ENCODE measurements at regions of chr9 and their contacts with region 1.

Region 1: DNA sequence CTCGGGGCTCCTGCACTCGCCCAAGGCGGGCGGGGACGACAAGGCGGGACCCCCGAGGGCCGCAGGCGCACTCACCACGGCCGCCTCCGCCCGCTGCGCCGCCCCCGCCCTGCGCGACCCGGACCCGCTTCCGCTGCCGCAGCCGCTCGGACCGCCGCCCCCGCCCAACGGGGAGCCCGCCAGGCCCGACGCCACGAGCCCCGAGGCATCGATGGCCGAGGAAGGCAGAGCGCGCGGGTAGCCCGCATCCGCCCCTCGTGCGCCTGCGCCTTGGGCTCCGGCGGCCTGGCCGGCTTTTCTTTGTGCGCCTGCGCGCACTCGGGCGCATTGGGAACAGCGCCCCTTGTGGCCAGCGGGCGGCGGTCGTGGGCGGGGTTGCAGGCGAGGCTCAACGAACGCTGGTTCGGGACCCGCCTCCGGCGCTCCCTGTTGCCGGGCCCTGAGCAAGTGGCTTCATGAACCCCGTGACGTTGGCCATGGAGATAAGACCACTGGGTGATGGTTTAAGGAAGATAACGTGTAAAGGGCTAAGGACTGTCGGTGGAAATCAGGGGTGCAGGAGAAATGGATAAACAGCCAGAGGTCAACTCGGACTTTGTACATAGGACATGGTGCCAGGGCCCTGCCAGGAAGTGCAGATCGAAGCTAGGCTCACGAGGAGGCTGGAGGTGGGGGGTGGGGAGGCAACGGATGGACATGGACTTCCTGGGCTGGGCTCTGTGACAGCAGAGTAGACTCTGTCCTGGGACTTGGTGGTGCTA is at the starts of genes C8G and FBXW5:
- DNase-seq: peak; percentile 95 to 98
- ATAC-seq: peak; percentile 45 to 88 (median 67)
- H3K4me3 ChIP-seq: peak within 1 kb of the TSS; percentile 66 to 99 (median 92)
- H3K27ac ChIP-seq: peak within 1 kb of the TSS; percentile 94 to 99 (median 98)
- H3K4me1 ChIP-seq: peaks cover 24 to 74% (median 40%) of the 10 kb centered on the region in 9 donors
- H3K27me3 ChIP-seq: no peaks in the 10 kb centered on the region
- CTCF ChIP-seq: peak; percentile 94 to 100 (median 98)
- total RNA-seq, gene C8G: 1.2 to 10.0 (median 2.4) TPM
- total RNA-seq, gene FBXW5: 118 to 169 (median 138) TPM

Region 2: DNA sequence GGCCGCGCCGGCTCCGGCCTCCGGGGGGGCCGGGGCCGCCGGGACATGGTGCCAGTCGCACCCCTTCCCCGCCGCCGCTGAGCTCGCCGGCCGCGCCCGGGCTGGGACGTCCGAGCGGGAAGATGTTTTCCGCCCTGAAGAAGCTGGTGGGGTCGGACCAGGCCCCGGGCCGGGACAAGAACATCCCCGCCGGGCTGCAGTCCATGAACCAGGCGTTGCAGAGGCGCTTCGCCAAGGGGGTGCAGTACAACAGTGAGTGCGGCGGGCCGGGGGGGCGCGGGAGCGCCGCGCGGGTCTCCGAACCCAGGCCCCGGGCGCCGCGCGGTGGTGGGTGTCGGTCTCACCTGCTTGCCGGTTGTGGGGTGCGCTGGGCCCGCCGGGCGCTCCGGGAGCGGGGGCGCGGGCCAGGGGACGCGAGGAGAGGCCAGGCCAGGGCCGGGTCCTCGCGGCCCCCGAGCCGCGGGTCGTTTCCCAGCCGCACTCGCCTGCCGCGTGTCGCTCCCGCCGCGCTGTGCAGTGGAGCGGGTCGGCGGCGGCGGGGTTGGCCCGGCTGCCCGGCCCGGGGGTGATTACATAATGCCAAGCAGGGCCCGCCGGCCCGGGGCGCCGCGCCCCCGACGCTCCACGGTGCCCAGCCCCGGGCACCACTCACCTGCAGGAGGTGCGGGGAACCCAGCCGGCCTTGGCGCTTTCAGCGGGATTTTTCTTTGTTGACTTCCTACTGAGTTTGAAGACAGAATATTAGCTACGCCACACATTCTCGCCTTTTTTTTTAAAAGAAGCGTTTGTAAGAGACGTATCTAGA is 136.4 kb before region 1 on chr9:
- intact Hi-C with region 1: no loop called
- DNase-seq: no peak
- ATAC-seq: peak in 4 of 8 donors; percentile 1 to 29 (median 9)
- H3K4me3 ChIP-seq: peak overlapping the region; percentile 67 to 100 (median 96)
- H3K27ac ChIP-seq: peak overlapping the region; percentile 42 to 95 (median 92)
- H3K4me1 ChIP-seq: peaks cover 0 to 43% (median 35%) of the 10 kb centered on the region in 9 donors
- H3K27me3 ChIP-seq: no peaks in the 10 kb centered on the region
- CTCF ChIP-seq: no peak

Region 3: DNA sequence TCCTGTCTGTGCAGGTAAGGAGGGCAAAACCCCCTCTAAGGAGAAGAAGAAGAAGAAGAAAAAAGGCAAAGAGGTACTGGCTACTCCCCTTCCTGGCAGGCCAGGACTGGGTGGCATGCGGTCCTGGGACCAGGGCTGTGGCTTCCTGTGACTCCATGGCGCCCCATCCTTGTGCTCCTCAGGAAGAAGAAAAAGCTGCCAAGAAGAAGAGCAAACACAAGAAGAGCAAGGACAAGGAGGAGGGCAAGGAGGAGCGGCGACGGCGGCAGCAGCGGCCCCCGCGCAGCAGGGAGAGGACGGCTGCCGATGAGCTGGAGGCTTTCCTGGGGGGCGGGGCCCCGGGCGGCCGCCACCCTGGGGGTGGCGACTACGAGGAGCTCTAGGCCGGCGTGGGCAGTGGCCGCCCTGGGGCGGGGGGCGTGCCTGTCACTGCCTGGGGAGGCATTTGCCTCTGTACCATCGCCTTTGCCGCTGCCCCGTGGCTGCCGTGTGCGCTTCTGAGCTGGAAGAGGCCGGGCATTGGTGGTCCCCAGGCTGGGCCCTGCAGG is 104.5 kb before region 1 on chr9:
- intact Hi-C with region 1: loop called in 5 of 10 experiments (anchors 2 to 5 kb)
- DNase-seq: no peak
- ATAC-seq: no peak
- H3K4me3 ChIP-seq: no peak overlapping the region
- H3K27ac ChIP-seq: no peak overlapping the region
- H3K4me1 ChIP-seq: peaks cover 17 to 39% (median 30%) of the 10 kb centered on the region in 9 donors
- H3K27me3 ChIP-seq: peaks cover 0 to 21% (median 17%) of the 10 kb centered on the region in 7 donors
- CTCF ChIP-seq: no peak

Region 4: GRCh38 chr9:136885950-136886578 is 58.6 kb before region 1 on chr9 and contains the start of gene TRAF2:
- intact Hi-C with region 1: loop called in 3 of 10 experiments (anchors 2 to 10 kb)
- DNase-seq: peak; percentile 98 to 99
- ATAC-seq: peak; percentile 93 to 99 (median 98)
- H3K4me3 ChIP-seq: peak within 1 kb of the TSS; percentile 80 to 99 (median 95)
- H3K27ac ChIP-seq: peak within 1 kb of the TSS in 9 of 10 donors; percentile 83 to 95 (median 93)
- H3K4me1 ChIP-seq: peaks cover 13 to 48% (median 37%) of the 10 kb centered on the region in 9 donors
- H3K27me3 ChIP-seq: no peaks in the 10 kb centered on the region
- CTCF ChIP-seq: peak in 2 of 9 donors; percentile 23 to 26
- total RNA-seq, gene TRAF2: 5.4 to 14.8 (median 9.7) TPM

Region 5: DNA sequence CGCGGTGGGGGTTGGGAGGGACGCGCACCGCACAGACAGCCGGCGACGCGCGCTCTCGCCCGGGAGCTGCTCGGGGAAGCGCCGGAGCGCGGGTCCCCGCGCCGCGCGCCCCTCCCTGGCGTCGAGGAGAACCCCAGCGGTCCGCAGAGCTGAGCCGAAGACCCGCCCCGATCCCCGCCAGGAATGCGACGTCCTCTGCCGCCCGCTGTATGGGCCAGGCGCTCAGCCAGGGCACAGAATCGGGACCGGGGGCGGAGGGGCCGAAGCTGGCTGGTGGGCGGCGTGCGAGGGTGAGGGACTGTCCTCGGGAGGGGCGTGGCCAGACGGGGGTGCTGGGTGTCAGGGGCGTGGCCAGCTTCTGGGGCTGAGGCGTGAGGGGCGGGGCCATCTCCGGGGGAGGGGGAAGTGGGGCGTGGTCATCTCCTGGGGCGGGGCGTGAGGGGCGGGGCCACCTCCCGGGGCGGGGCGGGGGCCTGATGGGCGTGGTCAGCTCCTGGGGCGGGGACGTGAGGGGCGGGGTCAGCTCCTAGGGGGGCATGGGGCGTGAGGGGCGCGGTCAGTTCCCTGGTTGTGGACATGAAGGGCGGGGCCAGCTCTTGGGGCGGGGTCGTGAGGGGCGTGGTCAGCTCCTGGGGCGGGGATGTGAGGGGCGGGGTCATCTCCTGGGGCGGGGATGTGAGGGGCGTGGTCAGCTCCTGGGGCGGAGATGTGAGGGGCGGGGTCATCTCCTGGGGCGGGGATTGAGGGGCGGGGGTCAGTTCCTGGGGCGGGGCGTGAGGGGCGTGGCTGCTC is 33.6 kb after region 1 on chr9:
- intact Hi-C with region 1: loop called in 2 of 10 experiments (anchors 2 to 5 kb)
- DNase-seq: peak; percentile 89
- ATAC-seq: peak; percentile 25 to 50 (median 39)
- H3K4me3 ChIP-seq: peak overlapping the region; percentile 49 to 67 (median 58)
- H3K27ac ChIP-seq: peak overlapping the region; percentile 58 to 93 (median 89)
- H3K4me1 ChIP-seq: peaks cover 16 to 94% (median 62%) of the 10 kb centered on the region in 9 donors
- H3K27me3 ChIP-seq: peaks cover 0 to 24% (median 0%) of the 10 kb centered on the region in 7 donors
- CTCF ChIP-seq: no peak

Region 6: DNA sequence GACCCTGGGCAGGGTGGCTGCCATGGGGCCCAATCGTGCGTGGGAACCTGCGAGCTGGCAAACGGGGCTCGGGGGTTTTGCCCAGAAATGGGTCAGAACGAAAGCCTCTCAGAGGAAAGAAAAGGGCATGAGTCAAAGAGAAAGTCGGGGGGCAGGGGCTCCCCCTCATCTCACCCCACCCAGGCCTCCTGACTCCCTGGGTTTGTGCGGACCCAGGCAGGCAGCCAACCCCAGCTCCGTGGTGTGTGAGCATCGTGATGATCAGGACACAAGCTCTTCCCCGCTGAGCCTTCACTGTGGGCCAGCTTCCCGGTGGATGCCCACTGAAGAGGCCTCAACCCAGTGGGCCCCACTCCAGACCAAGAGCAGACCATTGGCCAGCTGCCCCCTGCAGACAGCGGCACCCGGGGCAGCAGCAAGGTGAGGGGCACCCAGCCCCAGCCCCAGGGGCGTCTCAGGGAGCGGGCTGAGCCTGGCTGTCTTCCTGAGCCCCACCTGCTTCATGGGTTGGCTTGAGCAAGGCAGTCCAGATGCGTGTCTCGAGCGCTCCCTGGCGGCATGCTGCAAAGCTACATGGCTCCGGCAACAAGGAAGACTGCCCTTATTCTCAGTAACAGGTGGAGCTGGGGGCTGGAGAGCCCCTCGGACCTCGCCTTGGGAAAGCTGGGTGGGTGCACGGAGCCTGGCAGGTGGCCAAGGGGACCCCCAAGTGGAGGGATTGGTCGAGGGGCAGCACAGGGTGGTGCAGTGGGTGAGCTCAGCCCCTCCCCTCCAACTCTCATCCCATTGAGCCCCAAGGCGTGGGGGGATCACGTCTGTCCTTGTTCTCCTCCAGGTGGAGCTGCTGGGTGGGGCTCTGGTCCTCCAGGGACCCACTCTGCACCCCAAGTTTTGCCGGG is 90.4 kb after region 1 on chr9:
- intact Hi-C with region 1: loop called in 9 of 10 experiments (anchors 2 to 5 kb)
- DNase-seq: peak; percentile 76 to 86
- ATAC-seq: peak; percentile 67 to 89 (median 79)
- H3K4me3 ChIP-seq: peak overlapping the region in 1 of 10 donors; percentile 15
- H3K27ac ChIP-seq: peak overlapping the region in 2 of 10 donors; percentile 6 to 83
- H3K4me1 ChIP-seq: peaks cover 6 to 43% (median 11%) of the 10 kb centered on the region in 9 donors
- H3K27me3 ChIP-seq: no peaks in the 10 kb centered on the region
- CTCF ChIP-seq: peak; percentile 88 to 95 (median 93)

Region 7: GRCh38 chr9:137095664-137096517 is 151.2 kb after region 1 on chr9:
- intact Hi-C with region 1: no loop called
- DNase-seq: no peak
- ATAC-seq: peak in 1 of 8 donors; percentile 32
- H3K4me3 ChIP-seq: peak overlapping the region in 1 of 10 donors; percentile 13
- H3K27ac ChIP-seq: peak overlapping the region in 1 of 10 donors; percentile 72
- H3K4me1 ChIP-seq: no peaks in the 10 kb centered on the region
- H3K27me3 ChIP-seq: no peaks in the 10 kb centered on the region
- CTCF ChIP-seq: peak in 1 of 9 donors; percentile 40

Measured in heart right ventricle (tissue), 16 donors.